OCI-LY7 (cell line): ENCODE measurements at regions of chr17 and their contacts with region 1.

Region 1: DNA sequence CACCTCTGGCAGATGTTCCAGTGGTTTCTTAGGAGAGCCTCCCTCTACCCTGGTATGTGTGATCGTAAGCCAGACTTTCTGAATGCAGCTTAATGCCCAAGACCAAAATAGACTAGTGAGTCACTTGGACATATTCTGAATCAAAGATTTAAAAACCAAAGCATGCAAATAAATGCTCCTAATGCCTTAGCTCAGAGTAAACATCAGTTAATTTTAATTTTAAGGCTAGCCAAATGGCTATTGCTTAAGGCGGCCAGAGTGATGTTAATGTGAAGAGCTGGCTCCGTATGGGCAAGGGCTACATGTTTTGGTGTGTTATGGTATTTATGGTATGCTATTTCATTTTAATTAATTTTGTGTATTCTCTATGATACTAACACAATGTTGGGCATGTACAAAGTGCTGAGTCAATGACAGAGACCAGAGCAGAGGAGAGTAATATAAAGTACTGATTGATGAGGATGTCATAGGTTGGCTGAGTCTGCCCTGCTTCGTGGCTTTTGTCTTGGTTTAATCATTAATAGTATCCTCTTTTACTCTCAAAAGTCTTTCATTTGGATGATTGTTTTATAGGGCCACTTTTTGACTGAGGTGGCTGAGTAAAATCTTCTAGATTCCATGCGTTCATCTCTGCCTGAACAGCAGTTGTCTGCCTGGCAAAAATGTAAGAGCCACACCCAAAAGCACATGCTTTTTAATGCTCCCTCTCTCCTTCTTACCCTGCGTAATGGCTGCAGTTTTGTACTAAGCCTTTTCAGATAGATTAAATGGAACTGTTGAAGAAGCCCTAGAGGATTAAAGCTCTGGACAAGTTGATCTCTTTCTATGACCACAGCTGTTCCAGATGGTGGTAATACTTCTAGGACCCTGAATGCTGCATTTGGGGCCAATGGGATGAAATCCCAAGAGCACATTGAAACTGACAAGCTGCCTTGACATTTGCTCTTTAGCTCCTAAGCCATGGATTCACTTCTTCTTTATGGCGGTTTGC is 59.6 kb downstream of the MAP2K6 start:
- DNase-seq: no peak
- H3K4me3 ChIP-seq: no peak overlapping the region
- H3K27ac ChIP-seq: no peak overlapping the region
- H3K4me1 ChIP-seq: no peaks in the 10 kb centered on the region
- CTCF ChIP-seq: no peak

Region 2: GRCh38 chr17:69492410-69493071 is 18.4 kb after region 1 on chr17:
- CTCF ChIA-PET with region 1: interaction called, 3 read pairs
- POLR2A ChIA-PET with region 1: interaction called, 11 read pairs
- intact Hi-C with region 1: no loop called
- DNase-seq: no peak
- H3K4me3 ChIP-seq: no peak overlapping the region
- H3K27ac ChIP-seq: no peak overlapping the region
- H3K4me1 ChIP-seq: peaks cover 6% of the 10 kb centered on the region
- CTCF ChIP-seq: no peak